ENCODE measurements at regions of chr17 and their contacts with region 1.

Region 1: DNA sequence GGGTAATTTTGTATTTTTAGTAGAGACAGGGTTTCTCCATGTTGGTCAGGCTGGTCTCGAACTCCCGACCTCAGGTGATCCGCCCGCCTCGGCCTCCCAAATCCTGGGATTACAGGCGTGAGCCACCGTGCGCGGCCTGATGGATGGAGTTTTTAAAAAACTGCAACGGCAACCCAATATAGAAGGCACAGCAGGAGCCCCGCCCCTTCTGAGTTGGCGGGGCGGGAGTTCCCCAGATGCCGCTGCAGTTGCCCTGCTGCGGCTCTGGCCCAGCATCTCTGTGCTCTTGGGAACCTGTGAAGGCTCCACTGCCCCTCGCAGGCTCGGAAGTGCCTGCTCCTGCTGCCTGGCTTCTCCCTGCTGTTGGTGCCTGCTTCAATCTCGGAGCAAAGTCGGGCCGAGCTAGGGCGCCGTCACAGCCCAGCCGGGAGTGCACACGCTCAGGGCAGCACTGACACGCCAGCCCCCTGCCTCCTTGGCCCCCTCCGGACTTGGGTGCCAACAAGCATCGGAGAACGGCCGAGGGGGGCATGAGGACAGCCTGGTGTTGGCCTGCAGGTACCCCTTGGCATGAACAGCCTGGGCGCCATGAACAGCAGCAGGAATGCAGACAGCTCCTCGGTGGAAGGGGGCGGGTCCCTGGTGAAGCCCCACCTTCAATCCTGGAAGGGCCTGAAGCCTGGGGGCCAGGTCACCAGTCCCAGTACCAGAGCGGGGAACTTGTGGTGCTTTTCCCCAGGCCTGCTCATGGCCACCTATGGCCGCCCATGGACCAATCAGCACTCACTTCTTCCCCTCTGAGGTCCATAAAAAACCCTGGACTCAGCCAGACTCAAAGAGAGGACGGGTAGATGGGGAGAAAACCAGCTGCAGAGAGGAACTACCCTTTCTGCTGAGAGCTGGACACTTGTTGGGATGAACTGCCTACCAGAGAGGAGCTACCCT is 2.3 kb upstream of the NT5M start:
- DNase-seq: peak; percentile 76

Region 2: GRCh38 chr17:17237026-17237799 is 63.7 kb before region 1 on chr17 and contains the start of gene FLCN:
- CTCF ChIA-PET with region 1: interaction called, 3 read pairs
- POLR2A ChIA-PET with region 1: interaction called, 10 read pairs
- DNase-seq: peak; percentile 83

Region 3: DNA sequence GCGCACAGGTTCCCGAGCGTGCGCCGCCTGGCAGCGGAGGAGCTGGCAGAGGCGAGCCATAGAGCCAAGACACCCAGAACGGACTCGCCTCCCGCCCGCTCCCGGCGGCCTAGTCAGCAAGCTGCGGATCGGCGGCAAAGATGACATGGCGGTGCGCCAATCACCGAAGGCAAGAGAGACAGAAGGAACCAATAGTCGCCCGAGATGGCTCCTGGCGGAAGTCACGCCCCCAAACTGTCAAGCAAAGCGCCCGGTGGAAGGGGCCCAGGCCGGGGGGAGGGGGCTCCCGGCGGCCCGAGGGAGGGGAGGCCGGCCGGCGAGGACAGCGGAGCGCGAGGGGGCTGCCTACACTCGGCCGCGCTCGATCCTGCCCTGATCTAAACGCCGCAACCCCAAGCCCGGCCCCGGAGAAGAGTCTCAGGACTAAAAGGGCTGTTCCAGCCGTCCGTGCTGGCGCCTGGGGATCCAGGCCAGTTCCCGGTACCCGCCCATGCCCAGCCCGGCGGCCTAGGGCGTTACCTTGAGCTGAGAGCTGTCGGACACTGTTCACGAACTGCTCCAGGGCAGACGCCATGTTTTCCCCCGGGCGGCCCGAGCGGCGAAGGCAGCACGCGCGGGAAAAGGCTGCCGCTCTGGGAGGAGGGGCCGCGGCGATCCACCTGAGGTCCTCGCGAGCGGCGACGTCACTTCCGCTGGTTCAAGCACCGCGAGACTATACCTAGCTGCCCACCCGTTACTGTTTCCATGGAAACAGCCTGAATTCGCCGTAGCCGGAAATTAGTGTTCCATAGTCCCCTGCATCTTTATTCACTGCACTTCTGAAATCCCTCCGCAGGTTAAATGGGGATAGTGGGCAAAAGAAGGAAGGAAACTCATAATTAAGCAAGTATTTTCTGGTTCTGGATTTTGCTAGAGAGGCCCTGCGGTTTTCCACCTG is 20.0 kb before region 1 on chr17 and contains the start of gene COPS3:
- CTCF ChIA-PET with region 1: no interaction called
- POLR2A ChIA-PET with region 1: interaction called, 61 read pairs
- DNase-seq: peak; percentile 98

Region 4: DNA sequence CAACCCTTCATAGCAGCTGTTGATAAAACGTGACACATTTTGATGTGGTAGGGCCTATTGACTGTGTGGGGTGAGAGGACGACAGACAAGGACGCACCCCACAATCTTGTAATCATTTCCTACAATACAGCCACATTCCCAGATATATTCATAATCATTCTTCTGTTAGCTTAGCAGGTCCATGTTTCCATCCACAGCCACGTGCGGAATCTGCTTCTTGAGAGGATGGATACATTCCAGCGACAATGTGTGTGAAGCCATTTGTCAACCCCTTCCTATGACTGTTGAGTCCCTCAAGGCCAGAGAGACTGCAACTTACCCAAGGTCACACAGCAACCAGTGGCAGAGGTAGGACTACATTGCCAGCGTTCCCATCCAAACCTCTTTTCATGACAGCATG is 11.2 kb before region 1 on chr17:
- CTCF ChIA-PET with region 1: interaction called, 4 read pairs
- POLR2A ChIA-PET with region 1: interaction called, 22 read pairs
- DNase-seq: no peak

Region 5: DNA sequence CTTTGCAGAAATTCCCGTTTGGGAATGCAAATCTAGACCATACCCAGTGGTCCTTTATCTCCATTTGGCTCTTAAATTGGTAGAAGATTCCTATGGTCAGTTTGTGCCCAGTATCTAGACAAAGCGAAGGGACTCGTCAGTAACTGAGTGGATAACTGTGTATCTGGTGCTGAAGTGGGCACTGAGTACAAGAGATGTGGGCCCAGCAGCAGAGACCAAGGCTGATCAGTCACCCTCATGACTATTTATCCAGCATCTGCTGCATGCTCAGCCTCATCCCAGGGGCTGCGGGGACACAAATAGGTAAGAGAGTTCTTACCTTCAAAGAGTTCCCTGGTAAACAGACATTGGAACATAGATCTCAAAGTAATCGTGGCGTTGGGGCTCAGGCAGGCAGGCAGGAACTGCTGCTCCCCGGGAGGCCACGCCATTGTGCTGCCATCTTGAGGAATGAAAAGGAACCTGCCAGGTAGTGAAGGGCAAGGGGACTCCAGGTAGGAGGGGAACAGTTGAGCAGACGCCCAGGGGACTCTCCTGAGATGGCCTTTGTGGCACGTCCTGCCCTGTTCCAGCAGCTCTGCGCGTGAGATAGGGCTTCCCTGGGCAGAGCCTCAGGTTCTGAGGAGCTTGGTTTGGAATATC is 12.6 kb after region 1 on chr17:
- CTCF ChIA-PET with region 1: interaction called, 3 read pairs
- POLR2A ChIA-PET with region 1: interaction called, 11 read pairs
- DNase-seq: no peak

Region 6: DNA sequence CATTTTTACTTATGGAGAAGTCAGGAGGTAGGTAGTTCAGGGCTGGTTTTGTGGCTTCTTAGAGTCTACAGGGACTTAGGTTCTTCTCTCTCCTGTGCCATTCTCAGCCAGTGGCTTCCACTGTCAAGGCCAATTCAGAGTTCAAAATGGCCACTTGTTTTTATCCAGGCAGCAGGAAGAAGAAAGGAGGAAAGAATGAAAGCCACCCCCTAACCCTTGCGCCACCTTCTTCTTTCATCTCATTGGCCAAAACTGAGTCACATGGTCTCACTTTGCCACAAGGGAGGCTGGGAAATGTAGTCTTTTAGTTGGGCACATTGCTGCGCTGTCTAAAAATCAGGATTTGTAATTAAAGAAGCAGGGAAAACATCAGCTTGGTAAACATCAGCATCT is 115.1 kb after region 1 on chr17:
- CTCF ChIA-PET with region 1: no interaction called
- POLR2A ChIA-PET with region 1: no interaction called
- DNase-seq: peak; percentile 52

Measured in HEK293T (cell line).